ENCODE measurements at regions of chr4 and their contacts with region 1.

Region 1: GRCh38 chr4:119212234-119212963 is at the start of gene USP53:
- DNase-seq: peak; percentile 98
- H3K4me3 Mint-ChIP-seq: peak within 1 kb of the TSS; percentile 84
- H3K27ac Mint-ChIP-seq: peak within 1 kb of the TSS; percentile 94
- H3K4me1 Mint-ChIP-seq: peaks cover 29% of the 10 kb centered on the region
- H3K27me3 Mint-ChIP-seq: no peaks in the 10 kb centered on the region
- CTCF ChIP-seq: no peak
- total RNA-seq, gene USP53: 47.4 and 68.0 TPM in 2 replicates

Region 2: DNA sequence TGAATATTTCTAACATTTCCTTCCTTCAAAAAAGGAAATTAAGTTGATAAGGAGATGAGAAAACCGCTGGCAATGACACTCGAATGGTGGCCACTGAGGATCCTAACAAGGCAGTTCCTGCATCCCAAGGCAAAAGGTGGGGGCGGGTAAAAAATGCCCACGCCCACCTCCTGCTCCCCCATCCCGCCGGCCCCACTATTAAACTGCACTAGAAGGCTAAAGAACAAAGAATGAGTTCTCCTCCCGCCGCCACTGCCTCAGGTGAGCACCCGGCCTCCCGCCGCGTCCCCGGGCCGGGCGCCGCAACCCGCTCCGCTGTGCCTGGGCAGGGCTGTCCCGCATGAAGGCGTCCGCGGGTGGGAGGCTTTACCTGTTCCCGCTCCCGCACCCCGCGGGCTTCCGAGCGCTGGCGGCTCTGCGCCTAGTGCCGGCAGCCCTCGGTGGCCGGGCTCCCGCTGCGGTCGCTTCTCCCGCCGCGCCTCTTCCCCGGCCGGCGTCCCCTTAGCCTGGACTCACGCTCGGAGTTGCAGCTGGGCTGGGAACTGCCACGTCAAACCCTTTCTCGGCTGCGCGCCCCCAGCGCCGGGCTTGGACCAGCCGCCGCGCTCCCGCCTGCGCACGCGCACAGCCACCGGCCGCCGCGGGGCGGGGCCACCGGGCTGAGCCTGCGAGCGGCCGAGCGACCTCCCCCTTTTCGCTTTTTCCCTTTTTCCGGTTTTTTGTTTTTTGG is 376.7 kb before region 1 on chr4 and contains the start of gene SEC24D:
- CTCF ChIA-PET with region 1: no interaction called
- POLR2A ChIA-PET with region 1: interaction called, 3 read pairs
- intact Hi-C with region 1: loop called (anchors 5 kb)
- DNase-seq: peak; percentile 84
- H3K4me3 Mint-ChIP-seq: peak within 1 kb of the TSS; percentile 95
- H3K27ac Mint-ChIP-seq: peak within 1 kb of the TSS; percentile 96
- H3K4me1 Mint-ChIP-seq: peaks cover 17% of the 10 kb centered on the region
- H3K27me3 Mint-ChIP-seq: no peaks in the 10 kb centered on the region
- CTCF ChIP-seq: no peak
- total RNA-seq, gene SEC24D: 117 and 134 TPM in 2 replicates

Region 3: GRCh38 chr4:119025916-119026661 is 186.3 kb before region 1 on chr4:
- CTCF ChIA-PET with region 1: interaction called, 5 read pairs
- POLR2A ChIA-PET with region 1: interaction called, 99 read pairs
- intact Hi-C with region 1: no loop called
- DNase-seq: peak; percentile 88
- H3K4me3 Mint-ChIP-seq: peak overlapping the region; percentile 62
- H3K27ac Mint-ChIP-seq: peak overlapping the region; percentile 95
- H3K4me1 Mint-ChIP-seq: peaks cover 10% of the 10 kb centered on the region
- H3K27me3 Mint-ChIP-seq: no peaks in the 10 kb centered on the region
- CTCF ChIP-seq: peak; percentile 6

Region 4: DNA sequence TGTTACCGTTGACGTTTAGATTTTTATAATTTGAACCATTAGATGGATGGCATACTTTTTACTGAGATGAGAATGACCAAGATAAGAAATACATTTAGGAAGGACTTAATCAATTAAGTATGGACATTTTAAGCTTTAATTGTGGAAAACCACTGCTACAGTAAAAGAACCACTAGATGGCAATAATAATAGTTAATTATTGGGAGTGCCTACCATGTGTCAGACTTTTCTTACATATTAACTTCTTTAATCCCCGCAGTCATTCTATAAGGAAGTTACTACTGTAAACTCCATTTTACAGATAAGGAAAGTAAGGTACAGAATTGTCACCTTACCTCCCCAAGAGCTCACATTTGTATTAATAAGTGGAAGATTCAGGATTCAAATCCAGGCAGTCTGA is 125.3 kb before region 1 on chr4:
- CTCF ChIA-PET with region 1: interaction called, 16 read pairs
- POLR2A ChIA-PET with region 1: interaction called, 17 read pairs
- intact Hi-C with region 1: loop called (anchors 2 kb)
- DNase-seq: no peak
- H3K4me3 Mint-ChIP-seq: no peak overlapping the region
- H3K27ac Mint-ChIP-seq: no peak overlapping the region
- H3K4me1 Mint-ChIP-seq: no peaks in the 10 kb centered on the region
- H3K27me3 Mint-ChIP-seq: no peaks in the 10 kb centered on the region
- CTCF ChIP-seq: no peak

Region 5: GRCh38 chr4:119189638-119190037 is 22.8 kb before region 1 on chr4:
- CTCF ChIA-PET with region 1: interaction called, 4 read pairs
- POLR2A ChIA-PET with region 1: interaction called, 17 read pairs
- intact Hi-C with region 1: no loop called
- DNase-seq: peak; percentile 11
- H3K4me3 Mint-ChIP-seq: no peak overlapping the region
- H3K27ac Mint-ChIP-seq: no peak overlapping the region
- H3K4me1 Mint-ChIP-seq: no peaks in the 10 kb centered on the region
- H3K27me3 Mint-ChIP-seq: no peaks in the 10 kb centered on the region
- CTCF ChIP-seq: no peak

Region 6: GRCh38 chr4:119286377-119287002 is 74.1 kb after region 1 on chr4:
- CTCF ChIA-PET with region 1: interaction called, 3 read pairs
- POLR2A ChIA-PET with region 1: interaction called, 5 read pairs
- intact Hi-C with region 1: loop called (anchors 5 kb)
- DNase-seq: peak; percentile 64
- H3K4me3 Mint-ChIP-seq: no peak overlapping the region
- H3K27ac Mint-ChIP-seq: no peak overlapping the region
- H3K4me1 Mint-ChIP-seq: peaks cover 18% of the 10 kb centered on the region
- H3K27me3 Mint-ChIP-seq: no peaks in the 10 kb centered on the region
- CTCF ChIP-seq: peak; percentile 54

Measured in MCF 10A (cell line).